ENCODE measurements at regions of chr1 and their contacts with region 1.

Region 1: DNA sequence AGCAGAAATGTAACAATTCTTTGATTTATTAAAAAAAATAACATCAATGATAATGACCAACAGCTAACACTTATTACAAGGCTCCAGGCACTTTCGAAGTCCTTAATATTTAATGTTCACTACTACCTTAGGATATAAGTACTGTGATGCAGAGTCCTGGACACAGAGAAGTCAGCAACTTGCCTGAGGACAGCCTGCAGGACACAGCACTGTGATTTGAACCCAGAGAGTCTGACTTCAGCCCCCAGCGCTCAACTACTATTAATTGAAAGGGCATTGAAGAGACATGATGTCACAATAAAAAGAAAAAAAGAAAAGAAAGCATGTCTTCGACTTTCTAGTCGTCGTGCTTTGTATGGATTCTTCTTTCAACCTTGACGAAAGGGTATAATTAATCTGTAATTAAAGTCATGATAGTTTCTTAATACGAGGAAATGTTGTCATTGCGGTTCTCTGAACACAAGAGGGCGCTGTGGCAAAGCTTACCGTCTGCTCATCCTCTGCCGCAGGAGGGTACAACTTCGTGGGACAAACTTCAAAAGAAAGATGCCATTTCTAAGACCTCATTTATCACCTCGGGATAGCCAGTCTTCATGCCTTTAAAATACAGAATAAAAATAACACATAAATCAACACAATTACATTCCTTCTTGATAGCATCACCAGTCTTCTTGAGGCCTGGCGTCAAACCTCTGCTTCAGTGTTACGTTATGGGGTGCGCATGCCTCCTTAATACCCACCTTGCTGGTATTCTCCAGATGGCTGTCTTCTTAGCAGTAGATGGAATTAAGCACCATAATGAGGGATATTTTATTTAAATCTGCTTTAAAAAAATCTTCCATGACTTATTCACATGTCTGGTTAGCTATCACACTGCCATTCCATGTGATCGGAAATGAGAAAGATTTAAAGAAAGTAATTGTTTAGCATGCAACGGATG is 240.1 kb downstream of the DISC1 start:
- DNase-seq: peak; percentile 67
- ATAC-seq: peak in 1 of 2 donors; percentile 38

Region 2: GRCh38 chr1:231828182-231828920 is 38.3 kb before region 1 on chr1:
- intact Hi-C with region 1: no loop called
- DNase-seq: no peak
- ATAC-seq: peak; percentile 27 to 85

Region 3: DNA sequence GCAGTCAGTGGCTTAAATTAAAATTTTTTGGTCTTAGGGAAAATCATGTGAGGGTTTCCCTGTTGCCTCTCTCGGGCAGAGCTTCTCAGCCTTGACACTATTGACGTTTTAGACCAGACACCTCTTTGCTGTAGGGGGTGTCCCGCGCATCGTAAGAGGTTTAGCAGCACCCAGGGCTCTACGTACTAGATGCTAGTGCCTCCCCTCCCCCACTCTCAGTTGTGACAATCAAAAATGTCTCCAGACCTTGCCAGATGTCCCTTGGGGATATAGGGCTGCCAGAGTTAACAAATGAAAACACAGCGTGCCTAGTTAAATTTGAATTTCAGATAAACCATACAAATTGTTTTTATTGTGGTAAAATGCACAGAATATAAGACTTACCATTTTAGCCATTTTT is 53.2 kb after region 1 on chr1:
- intact Hi-C with region 1: loop called in 1 of 2 experiments (anchors 5 kb)
- DNase-seq: no peak
- ATAC-seq: peak; percentile 27 to 68

Region 4: DNA sequence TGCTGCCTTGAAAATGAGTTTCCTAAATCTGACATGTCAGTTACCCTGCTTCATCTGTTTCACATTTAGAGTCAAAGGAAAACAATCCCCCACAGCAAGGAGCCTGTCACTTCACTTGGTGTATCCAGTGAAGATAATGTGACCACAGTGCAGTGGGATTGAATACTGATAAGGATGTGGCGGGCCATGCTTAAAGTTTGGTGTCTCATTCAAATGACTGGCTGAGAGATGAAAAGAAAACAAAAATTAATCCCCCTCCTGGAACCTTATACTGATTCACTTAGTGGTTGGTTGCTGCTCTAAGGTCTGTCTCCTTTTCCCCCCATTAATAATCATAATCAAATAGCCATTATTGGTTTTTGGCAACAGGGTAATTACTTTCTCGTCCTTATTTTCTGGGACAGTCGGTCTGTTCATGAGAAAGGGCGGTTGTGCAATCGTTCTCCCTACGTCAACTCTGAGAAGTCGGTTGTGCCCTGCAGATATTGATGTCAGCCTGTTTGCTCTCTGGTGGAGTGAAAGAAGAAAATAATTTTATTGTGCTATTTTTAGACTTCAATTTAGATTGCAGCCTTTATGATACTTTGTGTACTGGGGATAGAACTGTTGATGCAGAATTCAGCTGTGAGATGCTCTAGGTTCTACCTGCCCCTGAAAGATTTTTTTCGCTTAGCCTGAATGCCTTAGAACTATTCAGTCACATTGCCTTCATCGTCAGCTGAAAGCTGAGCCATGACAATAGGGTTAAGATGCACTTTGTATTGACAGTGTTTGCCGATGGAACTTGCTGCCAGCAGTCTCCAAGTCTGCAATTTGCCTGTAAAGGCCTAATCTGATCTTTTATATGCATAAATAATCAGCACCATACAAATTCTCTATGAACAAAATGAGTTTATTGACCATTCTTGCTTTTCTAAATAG is 120.2 kb after region 1 on chr1:
- intact Hi-C with region 1: loop called in 1 of 2 experiments (anchors 10 kb)
- DNase-seq: peak; percentile 39
- ATAC-seq: peak; percentile 20 to 55

Region 5: DNA sequence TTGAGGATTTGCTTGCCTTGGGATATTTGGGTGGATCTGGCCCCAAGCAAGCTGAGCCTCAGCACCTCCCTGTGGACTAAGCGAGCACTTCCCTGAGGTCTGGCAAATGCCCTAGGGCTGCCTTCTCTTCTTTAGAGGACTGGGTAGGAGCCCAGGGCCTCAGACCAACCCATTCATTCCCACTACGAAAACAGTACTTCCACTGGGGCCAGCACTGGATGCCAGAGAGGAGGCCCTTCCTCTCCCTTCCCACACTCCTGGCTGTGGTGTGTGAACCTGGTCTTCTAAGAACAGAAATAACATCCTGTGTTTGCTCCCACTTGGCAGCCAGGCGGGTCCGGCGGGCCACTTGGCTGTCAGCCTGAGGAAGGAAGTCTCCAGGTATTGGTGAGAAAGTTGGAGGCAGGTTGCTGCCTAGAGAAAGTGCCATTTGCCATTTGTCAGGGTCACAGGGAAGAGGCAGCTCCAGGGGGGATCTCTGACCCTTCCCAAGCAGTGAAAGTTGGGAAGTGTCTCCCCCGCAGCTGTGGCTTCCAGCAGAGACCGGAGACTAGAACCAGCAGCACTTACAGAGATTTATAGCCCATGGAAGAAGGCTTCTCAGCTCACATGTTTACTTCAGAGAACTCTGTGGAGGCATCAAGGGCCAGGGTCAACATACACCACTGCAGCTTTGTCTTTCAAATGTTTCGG is 439.8 kb after region 1 on chr1:
- intact Hi-C with region 1: loop called in 1 of 2 experiments (anchors 5 kb)
- DNase-seq: peak; percentile 41
- ATAC-seq: peak; percentile 68 to 82